GM12878 (cell line): ENCODE measurements at regions of chr14 and their contacts with region 1.

Region 1: DNA sequence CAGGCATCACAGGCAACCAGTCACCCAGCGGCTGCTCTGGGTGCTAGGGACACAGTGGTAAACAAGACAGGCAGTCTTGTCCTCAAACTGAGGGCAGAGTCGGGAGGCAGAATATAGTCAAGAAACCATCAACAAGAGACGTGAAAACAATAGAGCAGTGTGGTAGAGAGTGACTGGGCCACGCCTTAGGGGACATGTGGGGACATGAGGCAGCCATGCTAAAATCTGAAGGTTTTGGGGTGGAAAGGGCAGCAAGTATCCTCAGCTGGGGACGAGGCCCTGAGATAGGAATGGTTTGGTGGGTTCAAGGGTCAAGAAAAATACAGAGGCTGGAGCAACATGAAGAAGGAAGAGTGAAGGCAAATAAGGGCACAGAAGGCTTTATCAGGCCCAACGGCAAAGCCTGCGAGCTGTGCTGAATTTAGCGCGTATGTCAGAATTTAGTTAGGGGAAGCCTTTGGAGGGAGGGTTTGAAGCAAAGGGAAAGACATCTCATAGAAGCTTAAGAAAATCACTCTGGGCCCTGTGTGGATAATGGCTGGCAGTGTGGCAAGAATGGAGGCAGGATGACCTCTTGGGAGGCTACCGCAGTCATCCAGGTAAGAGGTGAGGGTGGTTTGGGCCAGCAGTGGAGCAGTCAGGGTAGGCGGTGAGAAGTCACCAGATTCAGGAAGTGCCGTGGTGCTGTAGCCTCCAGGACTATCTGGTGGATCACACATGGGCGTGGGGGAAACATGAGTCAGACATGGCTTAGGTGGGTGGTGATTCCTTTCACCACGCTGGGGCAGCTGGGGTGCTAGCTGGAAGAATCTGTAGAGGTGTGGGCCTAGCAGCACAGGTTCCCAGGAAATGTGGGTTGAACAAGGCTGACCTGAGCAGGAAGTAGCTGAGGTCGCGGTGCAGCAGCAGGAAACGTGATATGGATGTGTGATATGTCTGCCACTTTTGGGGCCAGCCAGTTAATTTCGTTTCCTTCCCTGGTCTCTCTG is 3.0 kb downstream of the EVL start:
- DNase-seq: peak; percentile 89
- ATAC-seq: peak; percentile 44
- H3K4me3 ChIP-seq: peak overlapping the region; percentile 75
- H3K27ac ChIP-seq: peak overlapping the region; percentile 84
- H3K4me1 ChIP-seq: peaks cover 73% of the 10 kb centered on the region
- H3K27me3 ChIP-seq: no peaks in the 10 kb centered on the region
- CTCF ChIP-seq: no peak
- EP300 ChIP-seq: 0 out of 4 replicates have a peak, but pooled peaks have one; percentile 55 to 67
- POLR2A ChIP-seq: peak; percentile 74
- RAD21 ChIP-seq: no peak

Region 2: DNA sequence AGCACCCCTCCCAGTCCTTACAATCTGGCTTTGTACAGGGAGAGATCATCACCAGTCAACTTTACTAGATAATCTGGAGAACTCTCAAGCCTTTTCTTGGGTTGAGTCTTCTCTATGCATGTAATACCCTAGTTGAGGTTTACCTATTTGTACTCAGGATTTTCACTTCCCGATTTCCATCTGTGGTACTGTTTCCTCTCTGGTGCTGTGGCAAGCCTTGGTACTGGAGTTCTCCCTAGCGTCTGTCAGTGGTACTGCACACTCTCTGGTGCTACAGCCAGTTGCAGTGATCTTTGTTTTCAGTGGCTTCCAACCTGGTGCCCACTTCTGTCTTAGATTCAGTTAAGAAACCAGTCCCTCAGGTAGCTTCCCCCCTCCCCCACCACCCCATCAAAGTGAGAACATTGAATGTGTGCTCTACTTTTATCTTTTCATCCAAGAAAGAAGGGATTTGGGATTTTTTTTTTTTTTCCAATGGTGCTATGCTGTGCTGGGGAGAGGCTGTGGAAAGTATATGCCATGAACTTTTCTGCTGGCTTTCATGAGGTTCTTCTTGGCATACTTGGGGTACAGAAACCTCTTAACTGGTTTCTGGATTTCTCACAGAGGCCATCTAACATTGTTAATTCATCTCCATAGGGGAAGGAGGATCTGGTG is 72.4 kb before region 1 on chr14:
- CTCF ChIA-PET with region 1: interaction called, 3 read pairs
- POLR2A ChIA-PET with region 1: interaction called, 3 read pairs
- RAD21 ChIA-PET with region 1: interaction called, 5 read pairs
- SMC1A ChIA-PET with region 1: no interaction called
- in situ Hi-C with region 1: no loop called
- intact Hi-C with region 1: loop called (anchors 5 kb)
- DNase-seq: peak; percentile 89
- ATAC-seq: peak; percentile 100
- H3K4me3 ChIP-seq: no peak overlapping the region
- H3K27ac ChIP-seq: no peak overlapping the region
- H3K4me1 ChIP-seq: peaks cover 7% of the 10 kb centered on the region; the same call in 1 of the 2 replicates
- H3K27me3 ChIP-seq: no peaks in the 10 kb centered on the region; a peak in 1 of 4 replicates
- CTCF ChIP-seq: peak; percentile 91 to 97 (median 91); a peak in 5 of 6 replicates
- EP300 ChIP-seq: peak in 1 of 2 experiments; percentile 83; a peak in 2 of 4 replicates
- POLR2A ChIP-seq: no peak
- RAD21 ChIP-seq: peak; percentile 79

Region 3: GRCh38 chr14:100037353-100037752 is 30.9 kb before region 1 on chr14:
- CTCF ChIA-PET with region 1: interaction called, 20 read pairs
- POLR2A ChIA-PET with region 1: interaction called, 4 read pairs
- RAD21 ChIA-PET with region 1: no interaction called
- SMC1A ChIA-PET with region 1: interaction called, 6 read pairs
- in situ Hi-C with region 1: no loop called
- intact Hi-C with region 1: no loop called
- DNase-seq: no peak
- ATAC-seq: no peak
- H3K4me3 ChIP-seq: no peak overlapping the region
- H3K27ac ChIP-seq: no peak overlapping the region
- H3K4me1 ChIP-seq: no peaks in the 10 kb centered on the region
- H3K27me3 ChIP-seq: no peaks in the 10 kb centered on the region
- CTCF ChIP-seq: no peak
- EP300 ChIP-seq: no peak
- POLR2A ChIP-seq: no peak
- RAD21 ChIP-seq: no peak

Region 4: DNA sequence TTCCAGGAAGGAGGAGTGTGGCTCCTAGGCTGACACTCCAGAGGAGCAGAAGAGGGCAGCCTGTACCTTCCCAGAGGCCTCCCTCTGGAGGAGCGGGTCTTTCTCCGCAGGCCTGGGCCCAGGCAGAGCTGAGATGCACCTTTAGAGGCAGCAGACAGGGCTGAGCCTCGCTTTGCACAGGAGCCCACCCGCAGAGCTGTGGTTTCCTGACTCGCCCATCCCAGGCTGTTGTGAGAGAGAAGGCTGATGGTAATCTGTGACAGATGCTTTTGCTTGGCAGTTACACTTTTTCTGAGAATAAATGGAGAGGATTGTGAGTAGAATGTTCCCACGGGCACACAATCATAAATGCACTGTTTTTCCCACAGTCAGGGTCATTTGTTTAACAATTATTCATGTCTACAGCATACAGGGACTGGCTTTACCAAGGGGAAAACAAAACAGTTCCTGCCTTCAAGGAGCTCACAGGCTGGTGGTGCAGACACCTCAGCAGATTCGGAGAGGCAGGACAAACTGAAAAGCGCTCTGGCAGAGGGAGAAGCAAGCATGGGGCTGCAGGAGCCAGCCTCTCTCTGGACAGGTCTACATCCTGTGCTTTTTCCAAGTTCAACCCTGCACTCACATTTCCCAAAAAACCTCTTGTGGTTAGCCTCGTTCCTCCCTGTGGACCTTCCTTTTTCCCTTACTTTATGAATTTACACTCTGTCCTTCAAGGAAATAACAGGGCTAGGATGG is 10.9 kb after region 1 on chr14:
- CTCF ChIA-PET with region 1: interaction called, 23 read pairs
- POLR2A ChIA-PET with region 1: interaction called, 51 read pairs
- RAD21 ChIA-PET with region 1: interaction called, 33 read pairs
- SMC1A ChIA-PET with region 1: interaction called, 27 read pairs
- in situ Hi-C with region 1: no loop called
- intact Hi-C with region 1: no loop called
- DNase-seq: no peak
- ATAC-seq: peak; percentile 48
- H3K4me3 ChIP-seq: no peak overlapping the region
- H3K27ac ChIP-seq: peak overlapping the region; percentile 63
- H3K4me1 ChIP-seq: peaks cover 43% of the 10 kb centered on the region
- H3K27me3 ChIP-seq: no peaks in the 10 kb centered on the region
- CTCF ChIP-seq: no peak
- EP300 ChIP-seq: no peak
- POLR2A ChIP-seq: peak; percentile 21; the same call in 1 of the 2 replicates
- RAD21 ChIP-seq: no peak

Region 5: DNA sequence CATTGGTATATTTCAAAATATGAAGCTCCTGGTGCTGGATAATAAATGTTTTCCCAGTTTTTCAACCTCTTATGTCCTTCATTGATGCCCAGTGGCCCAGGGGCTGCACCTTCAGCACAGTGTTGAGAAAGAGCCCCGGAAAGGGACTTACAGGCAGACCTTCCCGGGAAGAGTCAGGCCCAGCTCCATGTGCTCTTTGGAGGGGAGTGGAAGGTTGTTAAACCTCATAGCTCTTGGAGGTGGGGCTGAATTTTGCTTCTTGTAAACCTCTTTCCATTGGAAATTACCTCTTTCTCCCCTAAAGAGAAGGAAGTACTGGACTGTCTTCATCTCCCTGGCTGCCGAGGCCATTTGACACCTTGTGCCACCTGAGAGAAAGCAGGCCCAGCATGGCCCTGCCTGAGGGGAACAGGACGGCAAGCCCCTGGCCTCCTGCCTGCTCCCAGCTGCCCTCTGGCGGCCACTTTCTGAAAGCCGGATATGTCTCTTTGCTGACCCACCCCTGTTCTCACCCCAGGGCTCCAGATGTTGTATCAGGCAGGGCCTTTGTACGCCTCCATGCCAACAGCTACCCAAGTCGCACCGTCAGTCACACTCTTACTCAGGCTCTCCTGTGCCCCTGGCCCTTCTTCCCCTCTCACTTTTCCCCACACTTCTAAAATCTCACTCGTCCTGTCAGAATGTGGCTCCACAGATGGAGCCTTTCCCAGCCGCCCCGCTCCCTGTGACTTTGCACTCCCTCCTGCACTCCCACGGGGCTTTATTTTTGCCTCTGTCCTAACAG is 40.0 kb after region 1 on chr14:
- CTCF ChIA-PET with region 1: interaction called, 130 read pairs
- POLR2A ChIA-PET with region 1: interaction called, 5 read pairs
- RAD21 ChIA-PET with region 1: interaction called, 44 read pairs
- SMC1A ChIA-PET with region 1: interaction called, 42 read pairs
- in situ Hi-C with region 1: no loop called
- intact Hi-C with region 1: loop called (anchors 1 kb)
- DNase-seq: peak; percentile 15
- ATAC-seq: peak; percentile 99
- H3K4me3 ChIP-seq: no peak overlapping the region
- H3K27ac ChIP-seq: no peak overlapping the region
- H3K4me1 ChIP-seq: peaks cover 9% of the 10 kb centered on the region
- H3K27me3 ChIP-seq: no peaks in the 10 kb centered on the region
- CTCF ChIP-seq: peak; percentile 82 to 89 (median 87)
- EP300 ChIP-seq: no peak
- POLR2A ChIP-seq: no peak
- RAD21 ChIP-seq: peak; percentile 79

Region 6: DNA sequence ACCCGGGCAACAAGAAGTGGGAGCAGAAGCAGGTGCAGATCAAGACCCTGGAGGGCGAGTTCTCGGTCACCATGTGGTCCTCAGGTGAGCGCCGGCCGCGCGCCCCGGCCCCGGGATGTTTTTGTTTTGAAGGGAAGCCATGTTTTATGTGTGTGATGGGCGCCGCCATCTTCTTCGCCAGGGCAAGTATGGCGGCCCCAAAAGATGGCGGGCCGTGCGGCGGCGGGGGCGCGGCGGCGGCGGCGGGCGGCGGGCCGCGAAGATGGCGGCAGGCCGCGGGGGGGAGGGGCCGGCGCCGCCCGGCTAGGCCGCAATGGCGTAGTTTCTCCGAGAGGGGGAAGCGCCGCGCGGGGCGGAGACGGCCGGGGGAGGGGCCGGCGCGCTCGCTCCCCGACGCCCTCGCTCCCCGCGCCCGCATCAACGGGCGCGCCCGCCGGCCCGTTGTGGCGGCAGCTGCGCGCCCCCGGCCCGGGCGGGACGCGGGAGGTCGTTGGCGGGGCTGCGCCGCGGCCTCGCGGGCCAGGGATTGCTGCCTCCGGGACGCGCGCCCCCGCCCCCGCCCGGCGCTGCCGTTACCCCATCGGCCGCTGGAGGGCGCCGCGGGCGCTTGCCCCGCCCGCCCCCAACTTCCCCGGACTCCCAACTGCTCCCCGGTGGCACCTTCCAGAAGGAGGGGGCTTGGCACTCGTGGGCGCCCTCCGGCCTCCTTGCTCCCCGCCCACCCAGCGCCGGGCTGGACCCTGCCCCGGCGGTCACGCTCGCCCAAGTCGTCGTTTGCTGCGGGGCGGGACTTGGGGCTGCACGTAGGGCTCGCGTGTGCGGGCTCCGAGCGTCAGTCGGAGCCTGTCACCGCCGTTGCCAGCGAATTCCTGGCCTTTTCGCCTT is 171.8 kb after region 1 on chr14:
- CTCF ChIA-PET with region 1: interaction called, 3 read pairs
- POLR2A ChIA-PET with region 1: interaction called, 3 read pairs
- RAD21 ChIA-PET with region 1: interaction called, 7 read pairs
- SMC1A ChIA-PET with region 1: interaction called, 5 read pairs
- in situ Hi-C with region 1: no loop called
- intact Hi-C with region 1: loop called (anchors 5 kb)
- DNase-seq: no peak
- ATAC-seq: peak; percentile 52
- H3K4me3 ChIP-seq: peak overlapping the region; percentile 95
- H3K27ac ChIP-seq: peak overlapping the region; percentile 74
- H3K4me1 ChIP-seq: no peaks in the 10 kb centered on the region
- H3K27me3 ChIP-seq: no peaks in the 10 kb centered on the region
- CTCF ChIP-seq: peak; percentile 58 to 71 (median 71); a peak in 5 of 6 replicates
- EP300 ChIP-seq: no peak
- POLR2A ChIP-seq: peak; percentile 60; the same call in 1 of the 2 replicates
- RAD21 ChIP-seq: peak; percentile 29; the same call in 1 of the 2 replicates